Posterior vena cava (tissue), 2 donors: ENCODE measurements at regions of chr18 and their contacts with region 1.

Region 1: GRCh38 chr18:13611601-13612195 is 114.7 kb downstream of the FAM210A start:
- DNase-seq: peak; percentile 86

Region 2: GRCh38 chr18:13435596-13436327 is 175.9 kb before region 1 on chr18:
- intact Hi-C with region 1: loop called in 1 of 2 experiments (anchors 10 kb)
- DNase-seq: no peak

Region 3: DNA sequence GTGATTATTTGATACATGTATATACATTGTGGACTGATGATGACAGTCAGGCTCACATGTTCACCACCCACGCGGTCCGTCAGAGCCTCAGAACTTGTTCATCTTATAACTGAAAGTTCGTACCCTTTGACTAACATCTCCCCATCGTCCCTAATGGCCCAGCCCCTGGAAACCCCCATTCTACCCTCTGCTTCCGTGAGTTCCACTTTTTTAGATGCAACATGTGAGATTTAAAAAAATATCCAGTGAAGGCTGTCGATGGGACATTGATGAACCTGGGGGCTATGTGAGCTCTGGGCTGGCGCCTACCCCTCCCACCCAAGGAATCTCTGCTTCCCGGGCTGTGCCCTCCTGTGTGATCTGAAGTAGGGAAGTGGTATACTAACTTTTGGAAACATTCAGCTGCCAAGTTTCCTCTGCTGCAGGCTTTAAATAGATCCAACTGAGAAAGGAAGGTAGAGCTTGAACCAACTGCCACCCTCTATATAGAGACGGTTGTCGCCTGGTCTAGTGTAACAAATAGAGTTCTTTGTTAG is 49.1 kb before region 1 on chr18:
- intact Hi-C with region 1: loop called in 1 of 2 experiments (anchors 5 kb)
- DNase-seq: no peak